ENCODE measurements at regions of chrX and their contacts with region 1.

Region 1: DNA sequence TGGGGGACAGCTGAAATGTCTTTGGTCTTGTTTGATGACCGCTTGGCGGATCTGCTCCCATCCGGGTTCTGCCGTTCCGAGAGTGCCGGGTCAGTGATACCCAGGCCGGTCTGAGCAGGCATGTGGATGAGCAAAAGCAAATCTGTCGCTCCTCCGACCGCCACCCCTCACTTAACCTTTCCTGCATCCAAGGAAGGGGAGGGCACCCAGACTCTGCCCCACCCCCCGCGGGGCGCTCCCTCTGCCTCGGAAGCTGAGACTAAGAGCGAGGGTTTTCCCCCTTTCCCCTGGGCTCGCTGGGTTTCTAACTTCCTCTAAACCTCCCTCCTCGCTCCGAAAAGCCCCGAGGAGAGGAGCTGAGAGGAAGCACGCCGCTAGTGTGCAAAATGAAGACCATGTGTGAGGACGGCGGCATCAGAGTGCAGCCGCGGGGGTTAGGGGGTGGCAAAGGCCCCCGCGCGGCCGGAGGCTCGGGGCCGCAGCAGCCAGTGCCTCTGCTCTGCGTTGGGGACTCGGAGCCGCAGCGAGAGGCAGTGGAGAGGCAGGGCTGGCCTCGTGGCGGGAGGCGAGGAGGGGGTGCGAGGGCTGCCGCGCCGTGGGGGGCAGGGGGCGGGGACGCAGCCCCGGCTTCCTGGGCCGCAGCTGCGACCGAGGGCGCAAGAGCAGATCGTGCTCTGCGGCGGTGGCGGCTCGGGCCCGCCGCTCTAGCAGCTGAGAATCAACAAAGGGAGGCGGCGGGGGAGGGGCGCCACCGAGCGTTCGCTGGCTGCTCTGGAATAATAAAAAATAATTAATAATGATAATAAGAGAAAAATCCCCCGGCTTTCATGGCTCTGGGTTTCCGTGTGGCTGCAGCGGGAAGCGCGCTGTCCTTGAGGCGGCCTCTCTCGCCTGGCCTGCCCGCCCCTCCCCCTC is 55.8 kb upstream of the BCOR start:
- DNase-seq: no peak
- H3K4me3 ChIP-seq: peak overlapping the region; percentile 53 to 62 (median 55)
- H3K27ac ChIP-seq: peak overlapping the region; percentile 71 to 81 (median 76)
- H3K4me1 ChIP-seq: peaks cover 27 to 66% (median 48%) of the 10 kb centered on the region in 4 donors
- H3K27me3 ChIP-seq: peaks cover 0 to 21% (median 0%) of the 10 kb centered on the region in 4 donors
- CTCF ChIP-seq: peak in 2 of 3 experiments; percentile 11 to 20
- EP300 ChIP-seq: no peak
- POLR2A ChIP-seq: no peak

Region 2: GRCh38 chrX:39814391-39814790 is 339.2 kb before region 1 on chrX:
- intact Hi-C with region 1: loop called (anchors 10 kb)
- DNase-seq: no peak
- H3K4me3 ChIP-seq: no peak overlapping the region
- H3K27ac ChIP-seq: peak overlapping the region in 1 of 4 donors; percentile 36
- H3K4me1 ChIP-seq: peaks cover 0 to 20% (median 14%) of the 10 kb centered on the region in 4 donors
- H3K27me3 ChIP-seq: no peaks in the 10 kb centered on the region
- CTCF ChIP-seq: peak; percentile 36 to 50 (median 42)
- EP300 ChIP-seq: no peak
- POLR2A ChIP-seq: no peak

Region 3: DNA sequence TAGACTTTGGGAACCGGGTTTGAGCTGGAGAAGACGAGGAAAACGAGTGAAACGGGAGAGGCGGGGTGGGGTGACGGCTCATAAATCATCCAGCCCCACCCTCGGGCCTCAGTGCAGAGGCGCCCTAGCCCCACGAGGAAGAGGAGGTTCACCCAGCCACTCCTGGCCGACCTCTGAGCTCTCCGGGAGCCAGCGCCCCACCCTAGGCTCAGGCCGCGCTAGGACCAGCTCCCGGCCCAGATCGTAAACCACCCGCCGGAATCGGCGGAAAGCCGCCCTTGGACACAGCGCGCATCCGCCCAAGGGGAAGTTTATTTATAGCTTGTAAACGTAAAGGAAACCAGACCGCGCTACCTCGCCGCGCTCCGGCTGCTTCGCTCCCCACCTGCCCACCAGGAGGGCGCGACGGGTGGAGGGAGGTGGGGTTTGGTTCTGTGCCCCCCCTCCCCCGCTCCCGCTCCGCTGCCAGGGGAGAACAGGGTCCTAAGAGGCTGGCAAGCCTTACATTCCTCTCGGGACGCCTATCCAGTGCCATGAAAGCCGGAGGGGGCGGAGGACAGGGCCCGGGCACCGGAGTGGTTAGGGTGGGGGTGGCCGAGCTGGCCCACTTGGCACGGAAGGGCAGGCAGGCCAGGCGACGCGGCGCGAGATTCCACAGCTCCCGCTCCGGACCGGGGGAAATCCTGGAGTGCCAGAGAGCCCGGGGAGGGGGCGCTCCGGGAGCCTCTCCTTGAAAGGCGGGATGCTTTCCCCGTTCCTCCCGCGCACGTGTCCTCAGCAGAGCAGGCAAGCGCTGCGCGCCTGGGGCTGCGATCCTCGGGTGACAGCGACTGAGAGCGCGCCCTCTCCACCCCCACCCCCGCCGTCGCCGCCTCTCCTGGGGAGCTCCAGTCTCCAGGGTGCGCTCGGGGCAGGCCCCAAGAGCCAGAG is 140.1 kb before region 1 on chrX:
- intact Hi-C with region 1: loop called (anchors 5 kb)
- DNase-seq: peak; percentile 91
- H3K4me3 ChIP-seq: peak overlapping the region; percentile 56 to 70 (median 61)
- H3K27ac ChIP-seq: peak overlapping the region; percentile 83 to 92 (median 91)
- H3K4me1 ChIP-seq: peaks cover 16 to 55% (median 35%) of the 10 kb centered on the region in 4 donors
- H3K27me3 ChIP-seq: peaks cover 0 to 19% (median 2%) of the 10 kb centered on the region in 4 donors
- CTCF ChIP-seq: no peak
- EP300 ChIP-seq: no peak
- POLR2A ChIP-seq: no peak

Region 4: DNA sequence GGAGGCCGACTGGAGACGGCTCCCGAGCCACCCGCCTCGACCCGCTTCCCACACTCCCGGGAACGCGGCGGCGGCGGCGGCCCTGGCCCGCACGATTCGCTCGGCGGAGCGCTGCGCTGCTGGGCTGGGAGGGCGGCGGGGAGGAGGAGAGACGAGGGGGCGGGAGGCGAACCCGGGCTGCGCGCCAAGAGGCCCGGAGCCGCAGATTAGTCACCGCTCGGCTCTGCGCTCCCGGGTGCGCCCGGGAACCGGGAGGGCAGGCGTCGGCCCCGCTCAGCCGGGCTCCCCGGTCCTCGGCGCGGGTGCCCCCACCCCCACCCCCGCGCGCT is 44.7 kb before region 1 on chrX:
- intact Hi-C with region 1: loop called (anchors 5 kb)
- DNase-seq: no peak
- H3K4me3 ChIP-seq: peak overlapping the region; percentile 59 to 81 (median 74)
- H3K27ac ChIP-seq: peak overlapping the region; percentile 83 to 98 (median 96)
- H3K4me1 ChIP-seq: peaks cover 31 to 63% (median 33%) of the 10 kb centered on the region in 4 donors
- H3K27me3 ChIP-seq: peaks cover 0 to 14% (median 4%) of the 10 kb centered on the region in 4 donors
- CTCF ChIP-seq: no peak
- EP300 ChIP-seq: no peak
- POLR2A ChIP-seq: peak; percentile 64

Region 5: DNA sequence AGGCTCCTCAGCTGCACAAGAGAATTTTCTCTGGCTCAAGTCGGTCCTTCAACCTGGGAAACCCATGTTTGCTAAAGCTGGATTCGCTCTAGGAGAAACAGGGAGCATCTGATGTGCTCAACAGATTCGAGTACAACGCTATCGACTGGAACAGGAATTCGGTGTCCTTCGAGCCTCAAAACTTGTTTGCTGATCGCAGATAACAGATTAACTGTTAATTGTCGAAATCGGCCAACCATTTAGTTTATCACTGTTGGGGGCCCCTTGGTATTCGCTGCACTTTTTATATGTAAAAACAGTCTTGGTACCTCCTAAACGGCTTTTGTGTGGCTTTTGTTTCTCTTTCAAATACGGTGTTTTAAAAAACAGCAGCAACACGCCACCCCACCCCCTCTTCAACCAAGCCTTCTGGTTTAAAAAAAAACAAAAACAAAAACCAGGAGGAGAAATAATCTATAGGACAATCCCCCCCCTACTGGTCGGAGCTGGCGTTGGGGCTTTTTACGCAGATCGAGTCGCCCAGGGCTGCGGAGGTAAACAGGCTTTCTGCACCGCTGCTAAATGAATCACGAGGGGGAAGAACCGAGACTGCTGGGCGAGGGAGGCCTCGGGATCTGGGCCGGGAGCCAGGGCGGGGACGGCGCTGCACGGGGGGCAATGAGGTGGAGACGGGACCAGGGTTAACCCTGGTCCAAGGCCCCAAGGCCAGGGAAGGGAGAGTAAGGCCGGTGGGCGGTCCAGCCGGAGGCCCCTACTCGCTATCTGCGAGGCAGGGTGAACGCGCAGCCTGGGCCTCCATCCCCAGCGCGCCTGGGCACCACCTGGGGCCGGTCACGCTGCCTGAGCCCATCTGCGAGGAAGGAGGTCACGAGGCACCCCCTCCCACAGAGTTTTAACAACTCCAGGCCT is 15.9 kb after region 1 on chrX:
- intact Hi-C with region 1: loop called (anchors 1 kb)
- DNase-seq: no peak
- H3K4me3 ChIP-seq: no peak overlapping the region
- H3K27ac ChIP-seq: peak overlapping the region in 3 of 4 donors; percentile 30 to 96 (median 90)
- H3K4me1 ChIP-seq: peaks cover 25 to 79% (median 58%) of the 10 kb centered on the region in 4 donors
- H3K27me3 ChIP-seq: peaks cover 0 to 22% (median 2%) of the 10 kb centered on the region in 4 donors
- CTCF ChIP-seq: peak; percentile 20 to 33 (median 23)
- EP300 ChIP-seq: no peak
- POLR2A ChIP-seq: no peak

Measured in esophagus muscularis mucosa (tissue), 4 donors.